Activated CD4-positive, alpha-beta T cell treated with anti-CD3 and anti-CD28 coated beads, Interleukin-2, amount 10 ng/mL, durations not matched to agents 7 days and 5 days (primary cell): ENCODE measurements at regions of chr2 and their contacts with region 1.

Region 1: GRCh38 chr2:233251306-233252116 is at the start of gene ATG16L1:
- DNase-seq: peak; percentile 96
- H3K4me3 Mint-ChIP-seq: peak within 1 kb of the TSS; percentile 88
- H3K27ac Mint-ChIP-seq: peak within 1 kb of the TSS; percentile 98
- H3K4me1 Mint-ChIP-seq: peaks cover 75% of the 10 kb centered on the region
- H3K27me3 Mint-ChIP-seq: no peaks in the 10 kb centered on the region
- total RNA-seq, gene ATG16L1: 52.6 to 55.4 TPM

Region 2: DNA sequence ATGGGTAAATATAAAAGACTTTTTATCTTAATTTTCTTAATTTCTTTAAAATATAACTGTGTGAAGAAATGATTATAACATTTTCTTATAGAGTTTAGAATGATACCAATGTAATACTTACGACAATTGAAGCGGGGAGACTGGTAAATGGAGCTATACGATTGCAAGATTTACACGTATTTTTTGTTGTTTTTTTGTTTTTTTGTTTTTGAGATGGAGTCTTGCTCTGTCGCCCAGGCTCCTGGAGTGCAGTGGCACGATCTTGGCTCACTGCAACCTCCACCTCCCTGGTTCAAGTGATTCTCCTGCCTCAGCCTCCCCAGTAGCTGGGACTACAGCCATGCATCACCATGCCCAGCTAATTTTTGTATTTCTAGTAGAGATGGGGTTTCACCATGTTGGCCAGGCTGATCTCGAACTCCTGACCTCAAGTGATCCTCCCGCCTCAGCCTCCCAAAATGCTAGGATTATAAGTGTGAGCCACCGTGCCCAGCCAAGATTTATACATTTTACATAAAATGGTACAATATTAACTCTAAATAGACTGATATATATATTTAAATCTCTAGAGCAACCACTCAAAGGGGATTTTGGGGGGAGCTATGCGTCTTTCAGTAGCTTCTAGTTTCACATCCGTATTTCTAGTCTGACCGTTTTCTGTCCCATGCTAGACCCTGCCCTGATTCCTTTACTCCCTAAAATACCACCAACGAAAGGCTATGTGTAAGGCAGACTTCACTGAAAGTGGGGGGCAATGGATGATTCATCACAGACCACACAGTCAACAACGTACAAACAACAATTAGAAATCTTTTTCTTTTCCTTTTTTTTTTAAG is 28.2 kb before region 1 on chr2:
- CTCF ChIA-PET with region 1: interaction called, 11 read pairs
- POLR2A ChIA-PET with region 1: no interaction called
- DNase-seq: no peak
- H3K4me3 Mint-ChIP-seq: no peak overlapping the region
- H3K27ac Mint-ChIP-seq: no peak overlapping the region
- H3K4me1 Mint-ChIP-seq: peaks cover 14% of the 10 kb centered on the region
- H3K27me3 Mint-ChIP-seq: peaks cover 4% of the 10 kb centered on the region

Region 3: GRCh38 chr2:233261819-233262555 is 10.5 kb after region 1 on chr2:
- CTCF ChIA-PET with region 1: interaction called, 45 read pairs
- POLR2A ChIA-PET with region 1: interaction called, 5 read pairs
- DNase-seq: no peak
- H3K4me3 Mint-ChIP-seq: no peak overlapping the region
- H3K27ac Mint-ChIP-seq: peak overlapping the region; percentile 39
- H3K4me1 Mint-ChIP-seq: peaks cover 66% of the 10 kb centered on the region
- H3K27me3 Mint-ChIP-seq: no peaks in the 10 kb centered on the region

Region 4: DNA sequence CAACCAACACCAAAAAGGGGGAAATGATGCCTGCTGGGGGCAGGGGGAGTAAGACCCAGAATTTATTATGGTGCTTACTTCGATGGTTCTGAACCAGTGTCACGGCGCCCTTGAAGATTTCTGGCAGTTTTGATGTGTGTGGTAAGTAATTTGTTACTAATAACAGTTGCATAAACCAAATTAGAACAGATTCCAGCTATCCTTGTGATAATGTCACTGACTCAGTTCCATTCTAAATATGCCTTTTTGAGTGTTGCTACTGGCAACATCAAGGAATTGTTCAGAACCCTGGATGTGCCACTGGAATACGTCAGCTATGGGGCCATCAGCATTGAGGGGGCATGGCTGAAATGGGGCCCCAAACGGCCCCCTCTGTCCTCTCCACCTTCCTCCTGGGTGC is 67.7 kb after region 1 on chr2:
- CTCF ChIA-PET with region 1: no interaction called
- POLR2A ChIA-PET with region 1: no interaction called
- DNase-seq: no peak
- H3K4me3 Mint-ChIP-seq: no peak overlapping the region
- H3K27ac Mint-ChIP-seq: no peak overlapping the region
- H3K4me1 Mint-ChIP-seq: peaks cover 17% of the 10 kb centered on the region
- H3K27me3 Mint-ChIP-seq: peaks cover 9% of the 10 kb centered on the region

Region 5: GRCh38 chr2:233434666-233435330 is 183.3 kb after region 1 on chr2:
- CTCF ChIA-PET with region 1: no interaction called
- POLR2A ChIA-PET with region 1: no interaction called
- DNase-seq: no peak
- H3K4me3 Mint-ChIP-seq: no peak overlapping the region
- H3K27ac Mint-ChIP-seq: no peak overlapping the region
- H3K4me1 Mint-ChIP-seq: peaks cover 16% of the 10 kb centered on the region
- H3K27me3 Mint-ChIP-seq: no peaks in the 10 kb centered on the region